GM10248 (cell line): ENCODE measurements at regions of chr15 and their contacts with region 1.

Region 1: DNA sequence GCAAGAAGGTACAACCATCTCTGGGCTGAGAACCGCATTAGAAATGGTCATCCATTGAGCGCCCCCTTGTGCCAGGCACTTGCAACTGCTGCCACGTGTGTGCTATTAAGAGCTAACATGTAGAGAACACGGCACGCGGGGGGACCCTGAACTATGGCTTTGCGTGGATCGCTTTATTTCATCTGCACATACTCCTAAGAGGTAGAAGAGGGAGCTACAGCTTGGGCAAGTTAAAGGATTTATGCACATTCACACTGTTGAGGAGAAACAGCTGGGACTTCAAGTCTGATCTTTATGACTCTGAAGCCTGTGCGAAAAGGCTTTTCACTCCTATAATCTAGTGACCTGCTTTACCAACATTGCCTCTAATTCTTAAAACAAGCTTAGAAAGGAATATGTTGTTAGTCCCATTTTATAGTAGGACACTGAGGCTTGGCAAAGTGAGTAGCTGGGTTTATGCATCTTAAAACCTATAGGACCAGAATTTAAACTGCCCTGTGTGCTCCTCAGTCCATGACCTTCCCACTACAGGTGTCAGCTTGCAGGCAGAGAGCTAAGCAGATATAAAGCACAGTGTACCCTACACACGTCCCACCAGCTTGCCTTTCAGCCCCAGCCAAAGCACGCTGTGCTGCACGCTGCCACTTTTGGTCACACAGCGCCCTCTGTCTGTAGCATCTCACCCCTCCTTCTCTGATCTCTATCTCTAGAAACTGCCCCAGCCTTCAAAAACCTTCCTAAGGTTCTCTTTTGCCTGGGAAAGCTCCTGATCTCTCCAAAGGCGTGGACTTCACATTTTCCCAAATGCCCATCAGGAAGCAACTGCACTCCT is 57.8 kb downstream of the STARD5 start:
- DNase-seq: peak; percentile 79
- CTCF ChIP-seq: peak; percentile 97

Region 2: GRCh38 chr15:80455668-80456442 is 810.3 kb before region 1 on chr15:
- CTCF ChIA-PET with region 1: interaction called, 41 read pairs
- POLR2A ChIA-PET with region 1: no interaction called
- DNase-seq: peak; percentile 72
- CTCF ChIP-seq: peak; percentile 91

Region 3: GRCh38 chr15:80996247-80996646 is 269.9 kb before region 1 on chr15:
- CTCF ChIA-PET with region 1: interaction called, 22 read pairs
- POLR2A ChIA-PET with region 1: no interaction called
- DNase-seq: no peak
- CTCF ChIP-seq: peak; percentile 43

Region 4: GRCh38 chr15:81126892-81127291 is 139.3 kb before region 1 on chr15:
- CTCF ChIA-PET with region 1: interaction called, 14 read pairs
- POLR2A ChIA-PET with region 1: no interaction called
- DNase-seq: no peak
- CTCF ChIP-seq: no peak

Region 5: GRCh38 chr15:81189583-81190283 is 76.4 kb before region 1 on chr15:
- CTCF ChIA-PET with region 1: interaction called, 18 read pairs
- POLR2A ChIA-PET with region 1: no interaction called
- DNase-seq: no peak
- CTCF ChIP-seq: no peak

Region 6: GRCh38 chr15:81296673-81297072 is 30.5 kb after region 1 on chr15:
- CTCF ChIA-PET with region 1: interaction called, 65 read pairs
- POLR2A ChIA-PET with region 1: no interaction called
- DNase-seq: peak; percentile 67
- CTCF ChIP-seq: no peak

Region 7: GRCh38 chr15:81342561-81342960 is 76.4 kb after region 1 on chr15:
- CTCF ChIA-PET with region 1: interaction called, 82 read pairs
- POLR2A ChIA-PET with region 1: no interaction called
- DNase-seq: no peak
- CTCF ChIP-seq: no peak